Activated CD8-positive, alpha-beta T cell treated with anti-CD3 and anti-CD28 coated beads for 36 hours (primary cell): ENCODE measurements at regions of chr13 and their contacts with region 1.

Region 1: DNA sequence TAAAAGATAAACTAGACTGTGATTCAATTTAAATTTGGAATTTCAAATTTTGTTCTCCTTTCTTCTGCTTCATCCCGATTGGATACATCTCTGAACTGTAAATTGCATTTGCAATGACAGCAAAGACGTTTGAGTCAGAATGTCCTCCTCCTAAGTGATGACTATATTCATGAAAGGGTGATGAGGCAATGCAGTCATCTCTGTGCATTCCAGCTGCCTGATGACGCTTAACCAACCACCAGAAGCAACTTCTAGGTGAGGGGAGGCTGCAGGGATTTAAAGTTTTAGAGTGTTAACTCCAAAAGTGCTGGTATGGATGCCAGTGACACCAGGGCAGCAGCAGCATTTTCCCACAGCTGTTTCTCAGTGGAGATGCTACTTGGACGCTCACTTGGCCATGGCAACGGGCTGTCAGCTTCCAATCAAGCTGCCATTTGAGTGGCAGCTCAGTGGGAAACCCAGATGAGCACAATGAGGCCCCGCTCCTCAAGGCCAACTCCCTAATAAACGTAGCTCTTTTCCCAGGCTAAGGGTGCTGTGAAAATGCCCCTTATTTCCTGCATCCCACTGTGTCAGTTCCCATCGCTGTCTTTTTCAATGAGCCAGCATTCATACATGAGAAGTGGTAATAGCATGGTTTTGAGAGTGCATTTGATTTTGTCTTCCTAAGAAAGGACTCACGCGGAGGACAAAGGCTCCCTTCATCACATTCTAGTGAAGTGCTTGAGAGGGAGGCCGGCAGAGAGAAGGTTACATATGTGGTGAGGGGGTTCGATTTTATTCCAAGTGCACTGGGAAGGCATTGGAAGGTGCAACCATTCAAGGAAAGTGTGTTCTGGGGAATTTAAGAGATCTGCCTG is 45.2 kb upstream of the AMER2 start:
- DNase-seq: no peak
- ATAC-seq: no peak
- H3K4me3 Mint-ChIP-seq: no peak overlapping the region
- H3K27ac Mint-ChIP-seq: no peak overlapping the region
- H3K4me1 Mint-ChIP-seq: no peaks in the 10 kb centered on the region
- H3K27me3 Mint-ChIP-seq: peaks cover 2% of the 10 kb centered on the region
- CTCF ChIP-seq: no peak

Region 2: GRCh38 chr13:25232937-25233515 is 15.8 kb after region 1 on chr13:
- CTCF ChIA-PET with region 1: interaction called, 12 read pairs
- POLR2A ChIA-PET with region 1: no interaction called
- intact Hi-C with region 1: no loop called
- DNase-seq: no peak
- ATAC-seq: no peak
- H3K4me3 Mint-ChIP-seq: no peak overlapping the region
- H3K27ac Mint-ChIP-seq: no peak overlapping the region
- H3K4me1 Mint-ChIP-seq: no peaks in the 10 kb centered on the region
- H3K27me3 Mint-ChIP-seq: no peaks in the 10 kb centered on the region
- CTCF ChIP-seq: peak; percentile 65